Ascending aorta (tissue), 2 donors: ENCODE measurements at regions of chr15 and their contacts with region 1.

Region 1: DNA sequence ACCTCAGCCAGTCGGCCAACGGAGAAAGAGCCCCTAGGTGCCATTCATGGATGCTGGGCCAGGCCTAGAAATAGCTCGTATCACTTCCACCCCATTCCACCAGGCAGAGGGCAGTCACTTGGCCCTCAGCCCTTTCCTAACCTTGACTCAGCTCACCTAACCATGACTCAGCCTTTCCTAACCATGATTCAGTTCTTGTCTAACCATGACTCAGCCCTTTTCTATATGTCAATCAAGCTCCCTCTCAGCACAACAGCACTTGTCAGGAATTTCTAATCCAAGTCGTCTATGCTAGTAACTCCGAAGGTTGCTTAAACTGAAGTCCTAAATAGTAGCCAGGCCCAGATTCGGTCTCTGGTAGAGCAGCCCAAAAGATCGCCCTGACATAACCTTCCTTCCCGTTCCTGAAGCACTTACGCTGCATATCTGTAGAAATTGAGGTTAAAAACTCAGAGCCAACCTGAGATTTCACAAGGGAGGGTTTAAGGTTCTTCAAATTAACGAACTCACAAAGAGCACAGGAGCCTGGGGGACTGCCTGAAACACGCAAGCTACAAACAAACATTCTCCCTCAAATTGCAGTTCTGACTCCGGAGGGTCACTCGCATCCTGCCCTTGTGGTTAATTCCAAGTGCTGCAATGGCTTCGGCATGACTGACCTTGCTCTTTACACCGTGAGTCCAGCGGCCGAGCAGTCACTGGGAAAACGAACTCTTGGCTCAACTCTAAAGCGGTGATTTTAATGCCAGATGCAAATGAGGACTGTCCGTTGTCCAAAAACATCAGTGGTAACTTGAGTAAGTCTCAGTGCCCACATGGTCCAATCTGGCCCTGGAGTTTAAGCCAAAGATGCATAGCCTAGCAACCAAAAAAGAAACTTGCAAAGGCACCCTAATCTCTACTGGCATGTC is 99.9 kb downstream of the ADAMTS17 start:
- DNase-seq: peak in 1 of 2 donors; percentile 80
- H3K4me3 ChIP-seq: peak overlapping the region; percentile 3 to 37
- H3K27ac ChIP-seq: peak overlapping the region; percentile 67 to 70
- H3K4me1 ChIP-seq: peaks cover 5 to 30% of the 10 kb centered on the region in 2 donors
- H3K27me3 ChIP-seq: no peaks in the 10 kb centered on the region
- CTCF ChIP-seq: peak in 1 of 3 experiments; percentile 7

Region 2: GRCh38 chr15:100033140-100033857 is 208.5 kb before region 1 on chr15:
- intact Hi-C with region 1: loop called (anchors 5 kb)
- DNase-seq: no peak
- H3K4me3 ChIP-seq: no peak overlapping the region
- H3K27ac ChIP-seq: peak overlapping the region; percentile 85 to 87
- H3K4me1 ChIP-seq: peaks cover 12 to 32% of the 10 kb centered on the region in 2 donors
- H3K27me3 ChIP-seq: no peaks in the 10 kb centered on the region
- CTCF ChIP-seq: no peak

Region 3: DNA sequence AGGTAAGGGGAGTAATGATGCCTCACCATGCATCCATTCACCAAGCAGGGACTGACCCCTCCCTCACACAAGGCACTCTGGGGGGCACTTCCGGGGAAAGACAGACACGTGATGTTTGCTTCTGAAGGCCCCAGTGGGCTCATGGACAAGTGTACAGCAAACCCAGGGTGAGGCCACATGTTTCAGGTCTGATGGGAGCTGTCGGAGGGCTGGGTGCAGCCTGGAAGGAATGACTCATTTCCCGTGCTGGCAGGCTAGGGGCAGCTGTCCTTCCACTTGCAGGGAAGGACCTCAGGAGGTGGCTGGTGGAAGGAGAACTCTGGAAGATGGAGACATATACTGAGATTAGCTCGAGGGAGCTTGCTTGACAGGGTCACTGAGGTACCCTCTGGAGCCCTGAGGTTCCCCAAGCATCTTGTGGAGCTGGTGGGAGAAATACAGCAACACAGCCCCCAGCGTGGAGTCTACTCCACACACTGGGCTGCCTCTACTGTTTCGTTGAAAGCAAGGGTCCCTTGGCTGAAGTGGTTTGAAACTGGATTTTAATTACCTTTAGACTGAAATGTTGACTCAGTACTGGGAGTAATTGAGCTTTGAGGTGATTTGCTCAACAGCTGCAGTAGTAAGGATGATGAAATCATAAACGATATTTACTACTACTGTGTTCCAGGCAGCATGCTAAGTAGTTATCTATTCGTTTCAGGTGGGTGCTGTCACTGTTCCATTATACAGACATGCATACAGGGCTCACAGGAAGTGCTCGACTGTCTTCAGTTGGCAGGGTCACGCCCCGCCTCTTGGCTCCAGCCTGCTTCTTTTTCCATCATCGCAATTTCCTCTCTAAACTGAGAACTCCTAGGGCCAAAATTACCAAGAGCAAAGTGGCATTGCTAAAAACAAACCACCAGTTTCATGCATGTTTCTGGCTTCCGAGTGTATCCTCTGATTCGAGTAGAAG is 130.4 kb before region 1 on chr15:
- intact Hi-C with region 1: loop called (anchors 5 kb)
- DNase-seq: peak; percentile 79 to 95
- H3K4me3 ChIP-seq: peak overlapping the region in 1 of 2 donors; percentile 6
- H3K27ac ChIP-seq: peak overlapping the region; percentile 90 to 96
- H3K4me1 ChIP-seq: peaks cover 39 to 58% of the 10 kb centered on the region in 2 donors
- H3K27me3 ChIP-seq: no peaks in the 10 kb centered on the region
- CTCF ChIP-seq: peak in 1 of 3 experiments; percentile 15

Region 4: GRCh38 chr15:100308213-100308600 is 66.4 kb after region 1 on chr15:
- intact Hi-C with region 1: loop called (anchors 5 kb)
- DNase-seq: no peak
- H3K4me3 ChIP-seq: peak overlapping the region; percentile 18 to 60
- H3K27ac ChIP-seq: peak overlapping the region; percentile 57 to 59
- H3K4me1 ChIP-seq: peaks cover 0 to 27% of the 10 kb centered on the region in 2 donors
- H3K27me3 ChIP-seq: no peaks in the 10 kb centered on the region
- CTCF ChIP-seq: no peak

Region 5: DNA sequence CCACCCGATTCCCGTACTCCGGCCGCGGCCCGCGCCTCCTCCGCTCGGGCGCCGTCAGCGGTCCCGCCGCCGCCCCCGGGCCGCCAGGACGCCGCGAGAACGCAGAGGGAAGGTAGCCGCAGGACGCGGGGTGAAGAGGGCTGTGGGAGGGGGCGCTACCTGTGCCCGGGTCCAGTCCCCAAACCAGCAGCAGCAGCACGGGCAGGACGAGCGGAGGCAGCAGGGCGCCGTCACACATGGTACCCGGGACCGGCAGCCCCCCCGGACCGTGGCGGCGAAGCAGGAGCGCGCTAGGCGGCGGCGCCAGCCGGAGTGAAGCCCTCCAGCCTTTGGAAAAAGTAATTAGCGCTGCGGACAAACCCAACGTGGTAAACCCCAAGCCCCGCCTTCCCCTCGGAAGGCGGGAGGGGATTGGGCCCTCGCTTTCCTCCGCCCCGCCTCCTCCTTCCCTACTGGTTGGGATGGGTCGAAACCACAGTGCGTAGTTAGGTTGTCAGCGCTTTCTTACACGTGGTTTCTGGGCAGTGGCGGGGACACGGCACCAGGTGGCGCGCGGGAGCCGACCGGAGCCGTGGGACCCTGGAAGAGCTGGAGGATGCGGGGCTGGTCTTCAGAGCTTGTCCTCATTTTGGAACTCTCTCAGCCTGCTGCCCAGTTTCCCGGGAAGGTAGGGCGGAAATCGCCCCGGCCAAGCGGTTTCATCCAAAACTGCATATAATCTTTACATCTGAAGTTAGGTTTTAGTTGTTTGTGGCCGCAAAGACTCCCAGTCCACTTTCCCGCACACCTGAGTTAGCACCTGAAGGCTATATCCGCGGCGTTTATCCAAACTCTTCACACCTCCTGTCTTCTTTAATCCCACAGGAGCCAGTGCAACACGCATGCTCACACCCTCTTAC is 100.1 kb after region 1 on chr15 and contains the start of gene ADAMTS17:
- intact Hi-C with region 1: loop called (anchors 2 kb)
- DNase-seq: peak; percentile 89 to 98
- H3K4me3 ChIP-seq: peak within 1 kb of the TSS; percentile 81 to 96
- H3K27ac ChIP-seq: peak within 1 kb of the TSS; percentile 69 to 78
- H3K4me1 ChIP-seq: peaks cover 0 to 2% of the 10 kb centered on the region in 2 donors
- H3K27me3 ChIP-seq: no peaks in the 10 kb centered on the region
- CTCF ChIP-seq: peak; percentile 91 to 95 (median 94)
- total RNA-seq, gene ADAMTS17: 2.8 TPM